Activated CD4-positive, alpha-beta T cell treated with anti-CD3 and anti-CD28 coated beads for 36 hours (primary cell): ENCODE measurements at regions of chr3 and their contacts with region 1.

Region 1: DNA sequence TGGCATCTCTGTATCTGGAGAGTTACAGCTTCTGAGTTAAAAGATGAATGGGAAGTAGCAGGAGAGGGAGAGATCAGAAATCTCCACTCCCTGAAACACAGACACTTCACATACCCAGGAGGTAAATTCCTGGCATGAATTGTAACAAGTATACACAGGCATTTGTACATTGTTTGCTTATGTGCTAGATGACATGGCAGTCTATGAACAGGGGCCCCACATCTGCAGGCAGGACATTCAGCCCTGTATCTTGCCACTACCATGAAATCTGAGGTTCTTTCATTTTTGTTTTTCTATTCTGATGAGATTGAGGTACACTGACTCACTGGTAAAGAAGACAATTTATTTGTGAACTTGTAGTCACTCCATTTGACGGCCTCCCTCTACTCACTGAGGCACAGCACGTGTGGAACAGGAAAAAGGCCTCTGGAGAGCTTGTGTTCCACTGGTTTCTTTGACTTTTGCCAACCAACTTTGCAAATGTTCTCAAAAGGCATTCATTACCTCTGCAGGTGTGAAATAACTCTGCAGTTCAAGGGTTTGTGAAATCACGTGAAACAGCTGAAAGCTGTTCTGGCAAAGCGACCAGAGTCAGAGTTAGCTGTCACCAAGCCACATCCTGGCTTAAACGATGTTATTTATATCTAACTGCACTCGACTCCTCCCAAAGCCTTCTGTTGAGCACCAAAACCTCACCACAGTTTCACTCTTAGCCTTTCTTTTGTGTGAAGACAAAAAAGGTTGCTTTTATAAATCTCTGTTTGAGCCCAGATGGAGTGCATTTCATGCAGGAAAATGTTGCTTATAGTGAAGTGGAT is 401.3 kb upstream of the CFAP20DC start:
- DNase-seq: peak; percentile 72
- ATAC-seq: peak; percentile 92
- H3K4me3 Mint-ChIP-seq: peak overlapping the region; percentile 50
- H3K27ac Mint-ChIP-seq: peak overlapping the region; percentile 96
- H3K4me1 Mint-ChIP-seq: peaks cover 73% of the 10 kb centered on the region
- H3K27me3 Mint-ChIP-seq: no peaks in the 10 kb centered on the region

Region 2: GRCh38 chr3:59235634-59236012 is 215.5 kb before region 1 on chr3:
- CTCF ChIA-PET with region 1: no interaction called
- POLR2A ChIA-PET with region 1: no interaction called
- intact Hi-C with region 1: loop called in 1 of 2 experiments (anchors 10 kb)
- DNase-seq: peak; percentile 65
- ATAC-seq: peak; percentile 91
- H3K4me3 Mint-ChIP-seq: no peak overlapping the region
- H3K27ac Mint-ChIP-seq: no peak overlapping the region
- H3K4me1 Mint-ChIP-seq: peaks cover 14% of the 10 kb centered on the region
- H3K27me3 Mint-ChIP-seq: peaks cover 7% of the 10 kb centered on the region

Region 3: GRCh38 chr3:59424268-59425010 is 26.7 kb before region 1 on chr3:
- CTCF ChIA-PET with region 1: interaction called, 6 read pairs
- POLR2A ChIA-PET with region 1: no interaction called
- intact Hi-C with region 1: loop called (anchors 1 kb)
- DNase-seq: peak; percentile 35
- ATAC-seq: no peak
- H3K4me3 Mint-ChIP-seq: peak overlapping the region; percentile 8
- H3K27ac Mint-ChIP-seq: peak overlapping the region; percentile 68
- H3K4me1 Mint-ChIP-seq: peaks cover 74% of the 10 kb centered on the region
- H3K27me3 Mint-ChIP-seq: peaks cover 10% of the 10 kb centered on the region

Region 4: DNA sequence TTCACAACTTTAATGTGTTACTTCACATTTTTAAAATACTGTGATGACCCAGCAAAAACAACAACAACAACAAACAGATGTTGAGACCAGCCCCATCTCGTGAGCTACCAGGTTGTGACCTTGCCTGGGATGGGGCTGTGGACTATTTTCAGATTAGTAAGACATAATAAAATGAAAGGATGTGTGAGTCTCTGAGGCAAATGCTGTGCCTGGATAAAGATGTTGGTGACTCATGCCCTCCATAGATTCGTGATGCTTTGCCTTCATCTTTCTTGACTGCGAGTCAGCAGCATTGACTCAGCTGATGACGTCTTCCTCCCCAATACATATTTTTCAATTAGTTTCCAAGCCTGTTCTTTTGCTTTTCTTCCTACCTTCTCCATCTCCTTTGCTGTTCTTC is 51.7 kb after region 1 on chr3:
- CTCF ChIA-PET with region 1: no interaction called
- POLR2A ChIA-PET with region 1: no interaction called
- intact Hi-C with region 1: loop called (anchors 1 to 2 kb)
- DNase-seq: peak; percentile 71
- ATAC-seq: peak; percentile 97
- H3K4me3 Mint-ChIP-seq: no peak overlapping the region
- H3K27ac Mint-ChIP-seq: no peak overlapping the region
- H3K4me1 Mint-ChIP-seq: peaks cover 10% of the 10 kb centered on the region
- H3K27me3 Mint-ChIP-seq: no peaks in the 10 kb centered on the region

Region 5: GRCh38 chr3:59566481-59566975 is 115.4 kb after region 1 on chr3:
- CTCF ChIA-PET with region 1: no interaction called
- POLR2A ChIA-PET with region 1: no interaction called
- intact Hi-C with region 1: loop called in 1 of 2 experiments (anchors 1 kb)
- DNase-seq: peak; percentile 46
- ATAC-seq: peak; percentile 98
- H3K4me3 Mint-ChIP-seq: no peak overlapping the region
- H3K27ac Mint-ChIP-seq: peak overlapping the region; percentile 45
- H3K4me1 Mint-ChIP-seq: peaks cover 17% of the 10 kb centered on the region
- H3K27me3 Mint-ChIP-seq: peaks cover 4% of the 10 kb centered on the region

Region 6: GRCh38 chr3:59809710-59810444 is 358.7 kb after region 1 on chr3:
- CTCF ChIA-PET with region 1: no interaction called
- POLR2A ChIA-PET with region 1: no interaction called
- intact Hi-C with region 1: no loop called
- DNase-seq: no peak
- ATAC-seq: peak; percentile 30
- H3K4me3 Mint-ChIP-seq: no peak overlapping the region
- H3K27ac Mint-ChIP-seq: no peak overlapping the region
- H3K4me1 Mint-ChIP-seq: peaks cover 6% of the 10 kb centered on the region
- H3K27me3 Mint-ChIP-seq: no peaks in the 10 kb centered on the region